ENCODE measurements at regions of chr1 and their contacts with region 1.

Region 1: DNA sequence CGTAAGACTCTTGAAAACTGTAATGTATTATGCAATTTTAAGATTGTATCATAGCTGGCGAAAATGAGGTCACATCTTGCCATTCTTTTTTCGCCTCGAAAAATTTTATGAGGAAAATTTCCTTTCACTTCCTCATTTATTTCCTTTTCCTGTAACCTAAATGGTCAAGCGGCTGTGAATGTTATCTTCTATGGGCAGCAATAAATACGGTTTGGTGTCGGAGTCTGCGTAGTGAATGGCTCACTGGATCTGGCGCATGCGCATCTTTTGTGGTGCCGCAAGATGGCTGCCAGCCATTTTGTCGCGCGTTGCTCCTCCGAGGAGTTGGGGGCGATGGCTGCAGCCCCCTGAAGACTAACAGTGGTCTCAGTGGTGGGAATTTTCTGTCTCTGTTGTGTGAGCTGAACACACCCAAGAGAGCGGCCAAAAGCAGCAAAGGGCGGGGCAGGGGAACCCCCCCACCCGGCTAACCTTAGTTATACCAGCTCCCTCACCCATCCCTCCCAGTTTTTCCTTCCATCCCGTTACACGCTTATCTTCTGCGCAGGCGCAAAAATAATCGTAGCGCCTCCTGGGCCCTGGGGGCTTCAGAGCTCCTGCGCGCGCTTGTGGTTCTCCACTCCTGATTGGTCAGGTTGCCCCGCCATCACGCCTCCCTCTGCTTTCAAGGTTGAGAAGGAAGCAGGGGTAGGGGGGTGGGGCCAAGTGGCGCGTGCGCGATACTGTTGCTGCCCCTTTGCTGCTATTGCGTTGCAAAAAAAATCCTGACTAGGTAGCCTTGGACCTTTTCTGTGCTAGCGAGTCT is at the start of gene RPRD2:
- DNase-seq: peak; percentile 83 to 100 (median 99)
- ATAC-seq: peak; percentile 97
- H3K4me3 ChIP-seq: peak within 1 kb of the TSS; percentile 99
- H3K4me3 Mint-ChIP-seq: peak within 1 kb of the TSS; percentile 86 to 100 (median 98)
- H3K27ac ChIP-seq: peak within 1 kb of the TSS; percentile 84
- H3K27ac Mint-ChIP-seq: peak within 1 kb of the TSS; percentile 95 to 100 (median 98)
- H3K4me1 ChIP-seq: peaks cover 10% of the 10 kb centered on the region in 2 donors
- H3K4me1 Mint-ChIP-seq: peaks cover 25 to 37% (median 32%) of the 10 kb centered on the region in 7 donors
- H3K27me3 ChIP-seq: no peaks in the 10 kb centered on the region
- H3K27me3 Mint-ChIP-seq: peaks cover 0 to 2% (median 0%) of the 10 kb centered on the region in 5 donors
- total RNA-seq, gene RPRD2: 33.2 to 62.2 (median 40.6) TPM

Region 2: GRCh38 chr1:150144606-150145005 is 219.0 kb before region 1 on chr1:
- CTCF ChIA-PET with region 1: no interaction called
- POLR2A ChIA-PET with region 1: no interaction called
- intact Hi-C with region 1: no loop called
- DNase-seq: no peak
- ATAC-seq: no peak
- H3K4me3 ChIP-seq: no peak overlapping the region
- H3K4me3 Mint-ChIP-seq: no peak overlapping the region
- H3K27ac ChIP-seq: no peak overlapping the region
- H3K27ac Mint-ChIP-seq: peak overlapping the region in 7 of 9 donors; percentile 14 to 79 (median 61)
- H3K4me1 ChIP-seq: peaks cover 7 to 21% of the 10 kb centered on the region in 2 donors
- H3K4me1 Mint-ChIP-seq: peaks cover 27 to 56% (median 48%) of the 10 kb centered on the region in 7 donors
- H3K27me3 ChIP-seq: no peaks in the 10 kb centered on the region
- H3K27me3 Mint-ChIP-seq: peaks cover 0 to 26% (median 0%) of the 10 kb centered on the region in 5 donors

Region 3: GRCh38 chr1:150235852-150236613 is 127.6 kb before region 1 on chr1 and contains the start of gene ANP32E:
- CTCF ChIA-PET with region 1: no interaction called
- POLR2A ChIA-PET with region 1: interaction called, 19 read pairs
- intact Hi-C with region 1: loop called (anchors 1 kb)
- DNase-seq: peak; percentile 75 to 99 (median 98)
- ATAC-seq: peak; percentile 94
- H3K4me3 ChIP-seq: peak within 1 kb of the TSS; percentile 98
- H3K4me3 Mint-ChIP-seq: peak within 1 kb of the TSS in 3 of 10 donors; percentile 10 to 93 (median 60)
- H3K27ac ChIP-seq: peak within 1 kb of the TSS; percentile 97
- H3K27ac Mint-ChIP-seq: peak within 1 kb of the TSS in 4 of 9 donors; percentile 97 to 99 (median 98)
- H3K4me1 ChIP-seq: peaks cover 0 to 7% of the 10 kb centered on the region in 2 donors
- H3K4me1 Mint-ChIP-seq: peaks cover 11 to 22% (median 18%) of the 10 kb centered on the region in 7 donors
- H3K27me3 ChIP-seq: no peaks in the 10 kb centered on the region
- H3K27me3 Mint-ChIP-seq: peaks cover 0 to 4% (median 0%) of the 10 kb centered on the region in 5 donors
- total RNA-seq, gene ANP32E: 35.6 to 156 (median 44.8) TPM

Region 4: DNA sequence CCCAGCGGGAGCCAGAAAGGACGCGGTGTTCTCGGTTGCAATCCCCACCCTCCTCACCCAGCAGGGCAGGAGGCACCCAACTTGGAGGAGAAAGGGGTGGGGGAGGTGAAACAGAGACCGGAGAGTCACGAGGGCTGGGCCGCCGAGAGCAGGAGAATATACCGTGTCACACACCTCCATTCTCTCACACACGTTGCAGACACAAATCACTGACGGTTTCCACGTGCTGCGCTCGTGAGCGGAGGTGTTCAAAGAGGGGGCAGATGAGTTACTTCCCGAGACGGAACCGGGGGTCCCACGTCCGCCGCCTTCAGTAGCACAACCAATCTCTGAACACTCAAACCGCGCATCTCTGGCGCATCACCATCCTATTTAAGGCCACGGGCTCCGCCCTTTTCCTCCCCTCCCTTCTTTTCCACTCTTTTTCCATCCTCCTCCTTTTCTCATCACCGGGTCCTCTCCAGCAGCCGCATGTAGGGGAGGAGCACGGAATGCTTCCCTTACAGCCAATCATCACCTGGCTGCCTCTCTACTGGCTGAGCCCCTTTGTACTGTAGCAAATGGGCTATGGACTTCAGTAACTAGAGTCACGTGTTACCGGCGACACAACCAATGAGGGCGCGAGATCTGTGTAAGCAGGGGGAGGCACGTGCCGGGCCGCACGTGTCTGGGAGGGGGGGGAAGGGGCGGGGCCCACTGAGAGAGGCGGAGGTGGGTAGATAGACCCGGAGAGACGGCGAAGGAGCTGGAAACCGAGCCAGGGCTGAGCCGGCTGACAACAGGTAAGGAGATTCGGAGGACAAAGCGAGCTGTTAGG is 81.6 kb before region 1 on chr1 and contains the start of gene CIART:
- CTCF ChIA-PET with region 1: no interaction called
- POLR2A ChIA-PET with region 1: interaction called, 8 read pairs
- intact Hi-C with region 1: loop called in 1 of 2 experiments (anchors 1 kb)
- DNase-seq: peak; percentile 34 to 88 (median 82)
- ATAC-seq: peak; percentile 95
- H3K4me3 ChIP-seq: peak within 1 kb of the TSS; percentile 58
- H3K4me3 Mint-ChIP-seq: peak within 1 kb of the TSS; percentile 84 to 98 (median 94)
- H3K27ac ChIP-seq: peak within 1 kb of the TSS; percentile 52
- H3K27ac Mint-ChIP-seq: peak within 1 kb of the TSS; percentile 80 to 98 (median 91)
- H3K4me1 ChIP-seq: peaks cover 11 to 23% of the 10 kb centered on the region in 2 donors
- H3K4me1 Mint-ChIP-seq: peaks cover 20 to 36% (median 32%) of the 10 kb centered on the region in 7 donors
- H3K27me3 ChIP-seq: no peaks in the 10 kb centered on the region
- H3K27me3 Mint-ChIP-seq: peaks cover 0 to 13% (median 0%) of the 10 kb centered on the region in 5 donors
- total RNA-seq, gene CIART: 1.4 to 2.6 (median 2.4) TPM

Region 5: DNA sequence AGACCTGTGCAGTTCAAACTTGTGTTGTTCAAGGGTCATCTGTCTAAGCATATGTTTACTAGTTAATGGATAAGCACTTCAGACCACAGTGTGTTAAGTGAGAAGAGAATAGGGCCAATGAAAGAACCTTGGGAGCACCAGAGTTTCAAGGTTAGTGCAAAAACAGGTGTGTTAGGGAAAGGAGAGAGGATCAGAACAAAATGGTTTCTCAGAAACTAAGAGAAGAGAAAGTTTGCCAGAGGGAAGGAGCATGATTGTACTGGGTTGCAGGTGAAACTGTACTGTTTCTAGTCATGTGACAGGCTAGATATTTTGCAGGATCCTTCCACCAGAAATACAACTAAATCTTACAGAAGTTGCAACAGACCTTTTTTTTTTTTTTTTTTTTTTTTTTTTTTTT is 23.6 kb after region 1 on chr1:
- CTCF ChIA-PET with region 1: no interaction called
- POLR2A ChIA-PET with region 1: interaction called, 4 read pairs
- intact Hi-C with region 1: loop called in 1 of 2 experiments (anchors 2 kb)
- DNase-seq: no peak
- ATAC-seq: no peak
- H3K4me3 ChIP-seq: no peak overlapping the region
- H3K4me3 Mint-ChIP-seq: peak overlapping the region in 8 of 10 donors; percentile 3 to 53 (median 12)
- H3K27ac ChIP-seq: no peak overlapping the region
- H3K27ac Mint-ChIP-seq: peak overlapping the region in 7 of 9 donors; percentile 3 to 75 (median 25)
- H3K4me1 ChIP-seq: peaks cover 5 to 17% of the 10 kb centered on the region in 2 donors
- H3K4me1 Mint-ChIP-seq: peaks cover 27 to 76% (median 62%) of the 10 kb centered on the region in 7 donors
- H3K27me3 ChIP-seq: no peaks in the 10 kb centered on the region
- H3K27me3 Mint-ChIP-seq: no peaks in the 10 kb centered on the region

Region 6: DNA sequence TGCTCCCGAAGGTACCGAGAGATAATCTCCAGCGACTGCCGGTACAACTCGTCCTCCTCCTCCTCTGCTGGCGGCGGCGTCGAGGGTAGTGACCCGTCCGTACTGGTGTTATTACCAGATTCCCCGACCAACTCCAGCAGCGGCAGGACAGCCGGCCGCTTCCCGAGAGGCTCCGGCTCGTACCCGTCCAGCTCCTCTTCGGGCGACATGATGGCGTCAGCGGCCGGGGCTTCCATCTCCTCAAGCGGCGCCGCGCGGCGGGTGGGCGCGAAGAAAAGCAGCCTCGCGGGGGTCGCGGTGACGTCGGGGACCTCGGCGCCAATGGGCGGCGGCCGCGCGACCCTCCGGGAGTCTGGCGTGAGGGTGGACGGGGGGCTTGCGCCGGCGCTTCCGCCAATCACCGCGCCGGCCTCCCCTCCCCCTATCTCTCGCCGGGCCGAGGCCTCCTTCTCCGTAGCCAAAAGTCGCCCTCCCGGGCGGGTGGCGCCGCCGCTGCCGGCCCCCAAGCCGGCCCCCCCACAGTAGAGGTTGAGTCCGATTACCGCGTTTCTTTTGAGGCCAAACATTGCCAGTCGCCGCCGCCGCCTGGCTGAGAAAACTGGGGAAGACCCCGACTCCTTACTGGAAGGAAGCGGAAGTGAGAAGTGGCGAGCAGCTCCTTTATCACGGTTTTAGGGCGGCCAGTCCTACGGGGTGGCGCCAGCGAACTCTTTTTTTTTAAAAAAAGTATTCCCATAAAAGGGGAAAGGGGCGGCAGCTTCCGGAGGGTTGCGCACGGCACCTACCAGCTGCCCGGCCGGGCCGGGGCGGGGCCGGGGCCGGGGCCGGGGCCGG is 215.6 kb after region 1 on chr1 and contains the start of gene MCL1:
- CTCF ChIA-PET with region 1: no interaction called
- POLR2A ChIA-PET with region 1: interaction called, 7 read pairs
- intact Hi-C with region 1: loop called in 1 of 2 experiments (anchors 2 kb)
- DNase-seq: peak; percentile 75 to 88 (median 83)
- ATAC-seq: peak; percentile 90
- H3K4me3 ChIP-seq: peak within 1 kb of the TSS; percentile 95
- H3K4me3 Mint-ChIP-seq: peak within 1 kb of the TSS; percentile 92 to 99 (median 95)
- H3K27ac ChIP-seq: peak within 1 kb of the TSS; percentile 97
- H3K27ac Mint-ChIP-seq: peak within 1 kb of the TSS; percentile 96 to 99 (median 98)
- H3K4me1 ChIP-seq: peaks cover 3 to 15% of the 10 kb centered on the region in 2 donors
- H3K4me1 Mint-ChIP-seq: peaks cover 25 to 39% (median 29%) of the 10 kb centered on the region in 7 donors
- H3K27me3 ChIP-seq: no peaks in the 10 kb centered on the region
- H3K27me3 Mint-ChIP-seq: peaks cover 0 to 7% (median 0%) of the 10 kb centered on the region in 5 donors
- total RNA-seq, gene MCL1: 302 to 1,400 (median 377) TPM

Region 7: DNA sequence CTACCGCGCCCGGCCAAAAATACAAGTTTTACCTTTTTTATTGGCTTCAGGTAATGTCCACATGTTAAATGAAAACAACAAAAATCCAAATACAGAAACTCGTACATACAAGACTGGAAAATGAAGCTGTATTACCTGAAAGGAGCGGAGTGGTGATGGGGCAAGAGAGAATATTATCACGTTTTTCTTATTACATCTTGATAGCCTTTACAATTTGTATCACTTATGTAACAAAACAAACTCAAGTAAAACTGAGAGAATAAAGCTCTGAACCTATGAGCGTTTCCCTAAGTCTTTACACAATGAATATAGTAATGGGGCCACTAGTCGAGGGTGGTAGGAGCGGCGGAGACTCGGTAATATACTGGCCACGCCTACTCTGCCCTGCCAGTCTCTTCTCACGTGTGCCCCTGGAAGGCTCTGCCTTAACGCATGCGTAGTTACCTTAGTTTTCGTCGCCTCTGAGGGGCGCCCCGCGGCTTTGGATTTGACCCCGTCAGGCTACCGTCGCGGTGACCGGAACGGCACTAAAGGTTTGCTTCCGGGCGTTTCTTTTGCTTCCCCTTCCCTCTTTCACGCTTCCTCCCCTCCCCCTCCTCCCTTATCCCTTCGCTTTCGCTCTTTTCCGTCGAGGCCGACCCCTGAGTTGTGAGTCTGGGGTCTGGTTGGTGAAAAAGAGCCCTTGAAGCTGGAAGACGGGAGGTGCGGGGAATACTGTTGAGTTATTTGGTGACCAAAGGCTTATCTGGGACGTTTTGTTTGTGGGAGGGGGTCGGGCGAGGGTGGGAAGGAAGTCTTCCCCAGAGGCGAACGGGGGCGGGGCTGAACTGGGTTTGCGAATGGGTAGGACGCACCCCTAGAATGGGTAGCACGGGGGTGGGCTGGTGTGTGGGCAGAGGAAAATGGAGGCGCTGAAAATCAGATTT is 562.5 kb after region 1 on chr1 and contains the start of gene SETDB1:
- CTCF ChIA-PET with region 1: no interaction called
- POLR2A ChIA-PET with region 1: no interaction called
- intact Hi-C with region 1: loop called in 1 of 2 experiments (anchors 1 kb)
- DNase-seq: peak; percentile 69 to 93 (median 90)
- ATAC-seq: peak; percentile 98
- H3K4me3 ChIP-seq: peak within 1 kb of the TSS; percentile 92
- H3K4me3 Mint-ChIP-seq: peak within 1 kb of the TSS; percentile 92 to 97 (median 94)
- H3K27ac ChIP-seq: peak within 1 kb of the TSS; percentile 91
- H3K27ac Mint-ChIP-seq: peak within 1 kb of the TSS; percentile 92 to 99 (median 95)
- H3K4me1 ChIP-seq: peaks cover 0 to 7% of the 10 kb centered on the region in 2 donors
- H3K4me1 Mint-ChIP-seq: peaks cover 15 to 35% (median 27%) of the 10 kb centered on the region in 7 donors
- H3K27me3 ChIP-seq: no peaks in the 10 kb centered on the region
- H3K27me3 Mint-ChIP-seq: no peaks in the 10 kb centered on the region
- total RNA-seq, gene SETDB1: 57.3 to 94.9 (median 61.7) TPM

Measured in naive thymus-derived CD4-positive, alpha-beta T cell (primary cell).